AG04450 (cell line): ENCODE measurements at regions of chr14 and their contacts with region 1.

Region 1: DNA sequence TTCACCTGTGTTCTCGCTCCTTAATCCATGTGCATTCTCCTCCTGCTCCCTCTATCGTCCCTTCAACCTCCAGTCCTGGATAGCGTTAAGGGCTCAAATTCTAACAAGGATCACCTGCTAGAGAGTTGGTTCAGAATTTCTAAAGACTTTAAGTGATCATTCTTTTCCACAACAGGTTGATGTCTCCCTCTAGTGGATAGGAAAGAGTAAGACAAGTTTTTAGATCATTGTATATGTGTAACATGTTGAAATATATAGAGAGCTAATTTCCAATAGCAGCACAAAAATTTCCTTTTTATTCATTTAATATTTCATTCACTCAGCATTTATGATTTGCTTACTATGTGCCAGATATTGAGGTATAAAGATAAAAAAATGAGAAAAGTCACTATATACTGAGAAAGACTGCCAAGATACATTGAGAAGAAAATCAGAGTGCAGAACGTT is 9.3 kb upstream of the ESR2 start:
- DNase-seq: no peak
- H3K4me3 ChIP-seq: no peak overlapping the region
- H3K27ac ChIP-seq: no peak overlapping the region
- H3K27me3 ChIP-seq: peaks cover 5% of the 10 kb centered on the region
- CTCF ChIP-seq: peak; percentile 79

Region 2: DNA sequence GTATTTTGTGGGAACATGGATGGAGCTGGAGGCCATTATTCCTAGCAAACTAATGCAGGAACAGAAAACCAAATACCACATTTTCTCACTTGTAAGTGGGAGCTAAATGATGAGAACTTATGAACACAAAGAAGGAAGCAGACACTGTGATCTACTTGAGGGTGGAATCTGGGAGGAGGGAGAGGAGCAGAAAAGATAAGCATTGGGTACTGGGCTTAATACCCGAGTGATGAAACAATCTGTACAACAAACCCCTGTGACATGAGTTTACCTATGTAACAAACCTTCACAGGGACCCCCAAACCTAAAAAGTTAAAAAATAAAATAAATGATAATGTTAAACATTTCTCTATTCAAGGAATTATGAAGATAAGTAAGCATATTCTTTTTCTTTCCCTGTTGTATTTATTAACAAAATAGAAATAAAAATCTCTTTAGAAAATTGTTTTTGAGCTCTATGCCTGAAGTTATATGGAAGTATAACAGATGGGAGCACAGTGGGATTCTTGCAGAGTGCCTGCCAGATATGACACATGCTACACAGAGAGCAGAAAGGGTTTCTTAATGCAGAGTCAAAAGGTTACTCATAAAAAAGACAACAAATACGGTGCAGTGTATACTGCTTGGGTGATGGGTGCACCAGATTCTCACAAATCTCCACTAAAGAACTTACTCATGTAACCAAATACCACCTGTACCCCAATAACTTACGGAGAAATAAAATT is 502.7 kb before region 1 on chr14:
- CTCF ChIA-PET with region 1: interaction called, 39 read pairs
- POLR2A ChIA-PET with region 1: no interaction called
- DNase-seq: no peak
- H3K4me3 ChIP-seq: no peak overlapping the region
- H3K27ac ChIP-seq: no peak overlapping the region
- H3K27me3 ChIP-seq: no peaks in the 10 kb centered on the region
- CTCF ChIP-seq: no peak

Region 3: DNA sequence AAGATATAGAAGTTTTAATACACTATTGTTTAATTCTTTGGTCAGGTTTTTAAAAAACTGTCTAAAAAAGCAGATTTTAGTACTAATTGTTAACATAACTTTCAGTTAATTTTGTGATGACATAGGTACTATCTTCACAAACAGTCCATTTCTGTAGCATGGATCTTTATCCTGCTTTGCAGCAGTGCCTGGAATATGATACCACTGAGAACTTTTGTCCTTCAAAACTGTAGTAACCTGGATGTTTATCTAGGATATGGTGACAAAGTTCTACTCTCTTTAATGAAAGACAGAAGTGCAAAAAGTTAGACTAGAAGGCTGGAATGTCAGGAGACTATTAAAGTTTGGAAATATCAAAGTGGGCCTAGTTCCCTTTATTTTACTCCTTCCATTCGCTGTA is 290.8 kb before region 1 on chr14:
- CTCF ChIA-PET with region 1: interaction called, 89 read pairs
- POLR2A ChIA-PET with region 1: no interaction called
- DNase-seq: no peak
- H3K4me3 ChIP-seq: no peak overlapping the region
- H3K27ac ChIP-seq: no peak overlapping the region
- H3K27me3 ChIP-seq: no peaks in the 10 kb centered on the region
- CTCF ChIP-seq: no peak

Region 4: DNA sequence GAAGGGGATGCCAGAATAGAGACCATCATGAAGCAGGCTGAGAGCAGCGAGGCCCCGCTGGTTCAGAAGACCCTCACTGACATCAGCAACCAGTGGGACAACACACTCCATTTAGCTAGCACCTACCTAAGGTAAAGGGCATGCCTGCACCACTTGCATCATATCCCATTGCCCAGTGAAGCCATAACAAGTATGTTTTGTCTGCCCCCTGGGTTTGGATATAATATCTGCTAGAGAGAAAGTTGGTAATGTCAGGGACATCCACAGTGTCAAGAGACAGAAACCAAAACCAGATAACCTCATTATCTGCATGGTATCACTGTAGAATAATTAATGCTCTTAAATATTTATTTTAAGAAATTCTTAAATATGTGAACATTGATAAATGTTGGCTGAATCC is 276.9 kb before region 1 on chr14:
- CTCF ChIA-PET with region 1: interaction called, 18 read pairs
- POLR2A ChIA-PET with region 1: no interaction called
- DNase-seq: no peak
- H3K4me3 ChIP-seq: no peak overlapping the region
- H3K27ac ChIP-seq: no peak overlapping the region
- H3K27me3 ChIP-seq: no peaks in the 10 kb centered on the region
- CTCF ChIP-seq: no peak

Region 5: DNA sequence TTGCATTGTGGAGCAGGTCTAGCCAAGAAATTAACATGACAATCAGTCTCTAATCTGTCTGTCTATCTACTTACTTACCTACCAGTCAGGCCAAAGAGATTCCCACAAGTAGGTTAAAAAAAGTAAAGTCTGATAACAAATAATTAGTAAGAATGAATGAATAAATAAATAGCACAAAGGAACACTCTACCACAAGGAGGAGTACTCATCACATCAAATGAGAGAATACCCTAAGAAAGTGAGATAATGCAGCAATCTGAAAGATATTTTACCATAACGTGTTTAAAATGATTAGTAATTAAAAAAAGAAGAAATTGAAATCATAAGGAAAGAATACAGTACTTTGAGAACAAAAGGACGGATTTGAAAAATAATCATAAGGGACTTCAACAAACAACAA is 263.4 kb before region 1 on chr14:
- CTCF ChIA-PET with region 1: interaction called, 85 read pairs
- POLR2A ChIA-PET with region 1: no interaction called
- DNase-seq: peak; percentile 10
- H3K4me3 ChIP-seq: no peak overlapping the region
- H3K27ac ChIP-seq: no peak overlapping the region
- H3K27me3 ChIP-seq: no peaks in the 10 kb centered on the region
- CTCF ChIP-seq: peak; percentile 60

Region 6: DNA sequence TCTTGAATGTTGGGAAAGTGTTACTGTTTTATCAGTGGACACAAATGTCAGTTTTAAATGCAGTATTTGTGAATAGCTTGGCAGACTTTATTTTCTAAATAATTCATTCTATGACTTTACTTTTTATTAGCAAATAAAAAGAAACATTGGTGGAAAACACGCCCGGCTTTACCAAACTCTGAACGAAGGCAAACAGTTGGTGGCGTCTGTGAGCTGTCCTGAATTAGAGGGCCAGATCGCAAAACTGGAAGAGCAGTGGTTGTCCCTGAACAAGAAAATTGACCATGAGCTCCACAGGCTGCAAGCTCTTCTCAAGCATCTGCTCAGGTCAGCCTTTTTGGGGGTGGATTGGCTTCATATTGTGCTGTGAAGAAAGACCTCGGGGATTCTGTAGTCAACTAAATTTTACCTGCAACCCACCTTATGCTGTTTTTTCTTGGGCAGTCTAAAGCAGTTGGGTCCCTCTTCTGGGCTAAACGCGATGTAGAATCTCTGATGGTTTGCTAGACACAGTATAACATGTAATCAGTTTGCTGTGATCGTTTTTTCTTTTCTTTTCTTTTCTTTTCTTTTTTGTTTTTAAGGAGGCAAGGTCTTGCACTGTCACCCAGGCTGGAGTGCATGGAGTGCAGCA is 165.7 kb before region 1 on chr14:
- CTCF ChIA-PET with region 1: interaction called, 32 read pairs
- POLR2A ChIA-PET with region 1: no interaction called
- DNase-seq: no peak
- H3K4me3 ChIP-seq: no peak overlapping the region
- H3K27ac ChIP-seq: no peak overlapping the region
- H3K27me3 ChIP-seq: no peaks in the 10 kb centered on the region
- CTCF ChIP-seq: peak; percentile 44

Region 7: GRCh38 chr14:64338616-64339316 is 35.3 kb after region 1 on chr14:
- CTCF ChIA-PET with region 1: interaction called, 14 read pairs
- POLR2A ChIA-PET with region 1: interaction called, 3 read pairs
- DNase-seq: peak; percentile 95
- H3K4me3 ChIP-seq: peak overlapping the region; percentile 80
- H3K27ac ChIP-seq: peak overlapping the region; percentile 70
- H3K27me3 ChIP-seq: no peaks in the 10 kb centered on the region
- CTCF ChIP-seq: no peak